Lower lobe of right lung (tissue), 2 donors: ENCODE measurements at regions of chr7 and their contacts with region 1.

Region 1: GRCh38 chr7:116259871-116260440 is 49.6 kb downstream of the TES start:
- DNase-seq: no peak
- ATAC-seq: no peak
- H3K4me3 ChIP-seq: no peak overlapping the region
- H3K27ac ChIP-seq: no peak overlapping the region
- H3K4me1 ChIP-seq: no peaks in the 10 kb centered on the region
- H3K27me3 ChIP-seq: no peaks in the 10 kb centered on the region
- CTCF ChIP-seq: no peak

Region 2: DNA sequence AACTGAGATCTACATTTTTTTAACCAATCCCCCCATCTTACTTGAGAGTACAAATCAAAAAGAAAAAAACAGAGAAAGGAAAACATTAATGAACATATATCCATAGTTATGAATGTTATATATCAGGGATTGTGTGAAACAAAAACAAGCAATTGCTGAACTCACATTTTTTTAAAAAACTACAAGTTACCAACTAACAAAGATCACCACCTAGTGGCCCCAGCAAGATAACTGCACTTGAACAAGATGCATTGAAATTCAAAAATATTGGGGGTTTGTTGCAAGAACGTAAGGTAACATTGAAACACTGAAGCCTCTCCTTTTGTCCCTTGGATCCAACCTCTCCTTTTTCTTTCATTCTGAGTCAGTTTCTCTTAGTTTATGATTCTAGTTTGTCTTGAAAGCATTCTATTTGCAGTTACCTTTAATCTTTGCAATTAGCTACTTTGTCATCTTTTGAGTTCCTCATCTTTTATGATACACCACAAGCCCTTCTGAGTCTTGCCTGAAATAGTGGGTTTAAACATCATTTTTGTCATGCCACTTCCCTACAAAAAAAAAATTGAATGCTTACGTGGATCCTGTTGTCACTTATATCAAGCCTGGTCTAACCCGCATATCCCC is 136.9 kb before region 1 on chr7:
- intact Hi-C with region 1: no loop called
- DNase-seq: no peak
- ATAC-seq: no peak
- H3K4me3 ChIP-seq: no peak overlapping the region
- H3K27ac ChIP-seq: no peak overlapping the region
- H3K4me1 ChIP-seq: no peaks in the 10 kb centered on the region
- H3K27me3 ChIP-seq: no peaks in the 10 kb centered on the region
- CTCF ChIP-seq: peak; percentile 55

Region 3: DNA sequence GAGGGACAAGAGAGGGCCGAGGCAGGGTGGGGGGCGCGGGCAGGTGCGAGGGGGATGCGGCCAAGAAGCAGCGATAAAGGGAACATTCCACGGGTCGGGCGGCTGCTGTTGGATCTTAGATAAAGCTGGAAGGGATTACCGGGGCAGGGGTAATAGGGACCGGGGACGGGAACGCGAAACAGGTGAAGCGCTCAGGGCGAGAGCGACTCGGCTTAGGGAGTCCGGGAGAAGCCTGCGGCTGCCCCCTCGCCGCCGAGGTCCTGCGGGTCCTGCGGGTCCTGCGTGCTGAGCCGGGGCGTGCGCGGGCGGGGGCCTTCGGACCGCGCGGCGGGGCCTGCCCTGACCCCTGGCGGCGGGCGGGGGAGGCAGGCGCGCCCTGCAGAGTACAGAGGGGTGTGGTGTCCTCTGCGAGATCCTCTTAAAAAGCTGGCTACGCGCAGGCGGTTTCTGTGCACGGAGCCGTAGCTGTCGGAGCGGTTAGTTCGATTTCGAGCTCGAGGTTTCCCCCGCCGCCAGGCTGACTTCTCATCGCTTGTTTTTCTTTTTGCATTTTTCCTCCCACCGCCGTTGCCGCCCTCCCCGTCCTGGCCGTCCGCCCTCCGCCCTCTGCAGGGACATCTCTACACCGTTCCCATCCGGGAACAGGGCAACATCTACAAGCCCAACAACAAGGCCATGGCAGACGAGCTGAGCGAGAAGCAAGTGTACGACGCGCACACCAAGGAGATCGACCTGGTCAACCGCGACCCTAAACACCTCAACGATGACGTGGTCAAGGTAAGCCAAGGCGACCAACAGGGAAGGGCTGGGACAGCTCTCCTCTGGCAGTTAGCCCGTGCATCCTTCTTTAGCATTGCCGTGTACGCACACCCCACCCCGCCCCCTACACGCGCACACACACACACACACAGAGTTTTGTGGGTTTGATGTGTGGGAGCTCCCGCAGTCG is 266.2 kb after region 1 on chr7:
- intact Hi-C with region 1: loop called (anchors 10 kb)
- DNase-seq: peak; percentile 85
- ATAC-seq: peak; percentile 89 to 94
- H3K4me3 ChIP-seq: peak overlapping the region; percentile 76
- H3K27ac ChIP-seq: peak overlapping the region; percentile 92
- H3K4me1 ChIP-seq: peaks cover 27% of the 10 kb centered on the region
- H3K27me3 ChIP-seq: peaks cover 10% of the 10 kb centered on the region
- CTCF ChIP-seq: peak; percentile 87

Region 4: GRCh38 chr7:116588641-116589594 is 329.0 kb after region 1 on chr7:
- intact Hi-C with region 1: loop called (anchors 5 kb)
- DNase-seq: no peak
- ATAC-seq: peak; percentile 59 to 64
- H3K4me3 ChIP-seq: no peak overlapping the region
- H3K27ac ChIP-seq: peak overlapping the region; percentile 25
- H3K4me1 ChIP-seq: peaks cover 38% of the 10 kb centered on the region
- H3K27me3 ChIP-seq: no peaks in the 10 kb centered on the region
- CTCF ChIP-seq: peak; percentile 69